Colonic mucosa (tissue), 4 donors: ENCODE measurements at regions of chr7 and their contacts with region 1.

Region 1: DNA sequence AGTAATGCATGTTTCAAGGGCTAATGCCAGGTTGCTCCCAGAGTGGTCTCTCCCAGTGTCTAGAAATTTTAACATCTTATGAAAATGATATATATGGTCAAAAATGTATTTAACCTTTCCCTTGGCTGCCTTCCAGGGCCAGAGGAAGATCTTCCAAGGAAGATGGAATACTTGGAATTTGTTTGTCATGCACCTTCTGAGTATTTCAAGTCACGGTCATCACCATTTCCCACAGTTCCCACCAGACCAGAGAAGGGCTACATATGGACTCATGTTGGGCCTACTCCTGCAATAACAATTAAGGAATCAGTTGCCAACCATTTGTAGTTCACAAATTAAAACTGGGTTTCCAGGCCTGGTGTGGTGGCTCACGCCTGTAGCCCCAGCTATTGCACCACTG is 9.0 kb downstream of the GATAD1 start:
- DNase-seq: no peak
- H3K4me3 ChIP-seq: no peak overlapping the region
- H3K27ac ChIP-seq: no peak overlapping the region
- H3K4me1 ChIP-seq: no peaks in the 10 kb centered on the region
- H3K27me3 ChIP-seq: no peaks in the 10 kb centered on the region
- CTCF ChIP-seq: no peak

Region 2: DNA sequence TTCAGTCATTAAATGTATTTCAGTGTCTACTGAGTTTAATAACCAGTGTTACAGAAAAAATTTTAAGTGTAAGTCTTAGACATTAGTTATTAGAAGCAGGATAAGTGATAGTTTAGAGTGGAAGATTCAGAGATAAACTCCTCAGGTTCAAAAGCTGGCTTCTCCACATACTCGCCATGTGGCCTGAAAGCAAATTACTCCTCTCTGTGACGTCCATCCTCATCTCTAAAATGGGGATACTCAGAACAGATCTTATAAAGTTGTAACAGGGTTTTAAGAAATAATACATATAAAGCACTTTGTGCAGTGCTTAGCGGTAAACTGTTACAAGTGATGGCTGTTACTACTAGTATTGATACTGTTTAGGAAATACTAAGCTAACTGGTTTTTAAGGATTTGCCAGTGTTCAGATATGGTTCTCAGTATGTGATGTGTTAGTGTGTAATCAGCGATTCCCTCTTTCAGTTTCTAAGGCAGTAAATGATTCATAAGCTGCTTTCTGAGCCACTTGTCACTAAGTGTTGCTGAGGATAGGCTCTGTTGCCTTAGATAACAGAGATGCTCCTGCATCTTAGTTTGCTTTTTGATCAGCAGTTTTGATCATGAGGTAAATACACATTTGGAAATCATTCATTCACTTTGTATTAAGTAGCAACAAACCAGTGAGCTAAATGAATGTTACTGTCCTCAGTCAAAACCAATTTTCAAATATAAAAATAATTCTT is 380.6 kb before region 1 on chr7:
- intact Hi-C with region 1: no loop called
- DNase-seq: no peak
- H3K4me3 ChIP-seq: no peak overlapping the region
- H3K27ac ChIP-seq: no peak overlapping the region
- H3K4me1 ChIP-seq: no peaks in the 10 kb centered on the region
- H3K27me3 ChIP-seq: no peaks in the 10 kb centered on the region
- CTCF ChIP-seq: no peak

Region 3: GRCh38 chr7:92141161-92141560 is 315.1 kb before region 1 on chr7:
- intact Hi-C with region 1: no loop called
- DNase-seq: no peak
- H3K4me3 ChIP-seq: no peak overlapping the region
- H3K27ac ChIP-seq: no peak overlapping the region
- H3K4me1 ChIP-seq: no peaks in the 10 kb centered on the region
- H3K27me3 ChIP-seq: no peaks in the 10 kb centered on the region
- CTCF ChIP-seq: no peak

Region 4: DNA sequence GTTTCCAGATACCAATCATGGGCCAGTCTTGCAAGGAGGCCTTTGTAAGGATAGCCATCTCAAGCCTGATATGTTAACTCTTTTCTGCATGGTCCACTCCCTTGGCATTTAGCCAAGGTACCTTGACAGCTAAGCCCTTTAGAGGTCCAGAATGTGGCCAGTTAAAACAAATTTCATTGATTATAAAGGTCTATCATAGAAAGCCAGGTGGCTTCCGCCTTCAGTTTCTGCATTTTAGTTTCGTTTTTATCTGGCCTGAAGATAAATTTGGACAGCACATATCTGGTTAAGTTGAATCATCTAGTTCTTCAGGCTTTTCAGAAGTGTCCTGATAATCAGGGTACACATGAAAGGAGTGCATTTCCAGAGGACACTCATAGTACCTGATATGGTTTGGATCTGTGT is 179.8 kb before region 1 on chr7:
- intact Hi-C with region 1: no loop called
- DNase-seq: no peak
- H3K4me3 ChIP-seq: no peak overlapping the region
- H3K27ac ChIP-seq: no peak overlapping the region
- H3K4me1 ChIP-seq: no peaks in the 10 kb centered on the region
- H3K27me3 ChIP-seq: no peaks in the 10 kb centered on the region
- CTCF ChIP-seq: no peak

Region 5: GRCh38 chr7:92528188-92528957 is 72.1 kb after region 1 on chr7 and contains the starts of genes PEX1 and RBM48:
- intact Hi-C with region 1: loop called (anchors 10 kb)
- DNase-seq: peak; percentile 97
- H3K4me3 ChIP-seq: peak within 1 kb of the TSS; percentile 77
- H3K27ac ChIP-seq: peak within 1 kb of the TSS; percentile 81
- H3K4me1 ChIP-seq: no peaks in the 10 kb centered on the region
- H3K27me3 ChIP-seq: no peaks in the 10 kb centered on the region
- CTCF ChIP-seq: peak; percentile 35
- total RNA-seq, gene PEX1: 18.4 to 20.6 TPM
- total RNA-seq, gene RBM48: 9.2 to 10.2 TPM